ENCODE measurements at regions of chr9 and their contacts with region 1.

Region 1: DNA sequence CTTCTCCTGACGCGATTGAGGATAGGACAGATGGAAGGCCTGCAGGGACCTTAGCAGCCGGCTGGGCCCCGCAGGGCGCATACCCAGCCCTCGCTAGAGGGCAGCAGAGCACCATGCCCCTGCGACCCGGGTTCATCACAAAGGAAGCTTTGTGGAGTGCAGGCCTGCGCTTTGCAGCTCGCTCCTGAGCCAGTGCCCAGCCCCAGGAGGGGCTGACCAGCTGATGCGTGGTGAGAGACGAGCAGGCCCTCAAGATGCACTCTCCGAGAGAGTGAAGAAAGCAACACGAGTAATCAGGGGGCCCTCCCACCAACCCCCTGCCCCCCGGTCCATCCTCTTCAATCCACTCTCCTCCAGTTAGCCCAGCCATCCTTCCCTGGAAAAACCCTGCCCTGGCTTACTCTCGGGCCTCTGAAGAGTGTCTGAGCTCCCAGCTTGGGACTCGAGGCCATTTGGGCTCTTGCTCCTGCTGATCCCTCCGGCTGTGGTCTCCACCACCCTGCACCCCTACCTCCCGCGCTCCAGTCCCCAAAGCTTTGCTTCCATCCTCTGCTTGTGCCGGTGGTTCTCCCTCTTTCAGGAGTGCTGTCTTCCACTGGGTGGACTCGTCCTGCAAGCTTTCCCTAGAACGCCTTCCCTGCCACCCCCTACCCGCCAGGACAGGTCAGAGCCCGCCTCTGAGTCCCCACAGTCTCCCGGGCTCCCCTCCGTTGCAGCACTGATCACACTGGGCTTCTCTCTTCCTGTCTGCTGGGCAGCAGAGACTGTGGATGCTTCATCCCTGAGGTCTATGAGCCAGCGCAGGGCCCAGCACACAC is 9.1 kb upstream of the KIF12 start:
- H3K4me3 ChIP-seq: no peak overlapping the region
- H3K27ac ChIP-seq: no peak overlapping the region
- H3K4me1 ChIP-seq: no peaks in the 10 kb centered on the region
- CTCF ChIP-seq: peak; percentile 82

Region 2: DNA sequence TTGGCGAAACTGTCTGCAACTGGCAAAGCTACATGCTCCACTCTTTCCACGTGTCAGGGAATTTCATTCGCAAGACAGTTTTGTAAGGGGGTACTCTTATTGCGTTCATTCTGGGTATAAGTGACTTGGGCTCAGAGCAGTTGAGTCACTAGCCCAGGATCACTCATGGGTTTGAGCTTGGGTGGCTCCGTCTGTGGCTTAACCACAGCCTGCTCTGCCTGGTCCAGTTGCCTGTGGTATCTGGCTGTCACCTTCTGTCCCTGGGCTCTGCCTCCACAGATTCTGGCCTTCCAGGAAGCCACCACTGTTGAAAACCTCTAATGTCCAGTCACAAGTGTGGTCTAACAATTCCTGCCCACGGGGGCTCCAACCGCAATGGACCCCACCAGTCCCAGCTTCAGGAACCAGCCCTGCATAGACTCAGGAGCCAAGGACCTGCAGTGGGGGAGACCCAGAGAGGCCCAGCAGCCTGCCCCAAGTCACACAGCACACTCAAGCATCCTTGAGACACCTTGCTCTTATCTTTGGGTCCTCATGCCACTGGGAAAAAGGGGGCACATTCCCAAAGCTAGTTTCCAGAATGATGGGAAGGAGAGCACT is 19.6 kb before region 1 on chr9:
- CTCF ChIA-PET with region 1: interaction called, 139 read pairs
- POLR2A ChIA-PET with region 1: no interaction called
- H3K4me3 ChIP-seq: no peak overlapping the region
- H3K27ac ChIP-seq: no peak overlapping the region
- H3K4me1 ChIP-seq: no peaks in the 10 kb centered on the region
- CTCF ChIP-seq: no peak

Region 3: GRCh38 chr9:114155263-114155972 is 47.2 kb after region 1 on chr9 and contains the start of gene COL27A1:
- CTCF ChIA-PET with region 1: interaction called, 15 read pairs
- POLR2A ChIA-PET with region 1: no interaction called
- H3K4me3 ChIP-seq: peak within 1 kb of the TSS; percentile 66
- H3K27ac ChIP-seq: peak within 1 kb of the TSS; percentile 56; the same call in 1 of the 2 replicates
- H3K4me1 ChIP-seq: no peaks in the 10 kb centered on the region; the same call in 1 of the 2 replicates
- CTCF ChIP-seq: peak; percentile 80

Region 4: GRCh38 chr9:114203410-114204140 is 95.3 kb after region 1 on chr9:
- CTCF ChIA-PET with region 1: interaction called, 10 read pairs
- POLR2A ChIA-PET with region 1: no interaction called
- H3K4me3 ChIP-seq: no peak overlapping the region
- H3K27ac ChIP-seq: no peak overlapping the region
- H3K4me1 ChIP-seq: no peaks in the 10 kb centered on the region
- CTCF ChIP-seq: no peak

Region 5: GRCh38 chr9:114271641-114272081 is 163.4 kb after region 1 on chr9:
- CTCF ChIA-PET with region 1: interaction called, 37 read pairs
- POLR2A ChIA-PET with region 1: no interaction called
- H3K4me3 ChIP-seq: no peak overlapping the region
- H3K27ac ChIP-seq: no peak overlapping the region
- H3K4me1 ChIP-seq: no peaks in the 10 kb centered on the region
- CTCF ChIP-seq: no peak

Region 6: GRCh38 chr9:114299286-114300152 is 191.3 kb after region 1 on chr9:
- CTCF ChIA-PET with region 1: interaction called, 225 read pairs
- POLR2A ChIA-PET with region 1: no interaction called
- H3K4me3 ChIP-seq: no peak overlapping the region
- H3K27ac ChIP-seq: no peak overlapping the region
- H3K4me1 ChIP-seq: no peaks in the 10 kb centered on the region
- CTCF ChIP-seq: no peak